GM12878 (cell line): ENCODE measurements at regions of chr11 and their contacts with region 1.

Region 1: GRCh38 chr11:65471410-65471762 is 27.5 kb upstream of the MALAT1 start:
- DNase-seq: no peak
- ATAC-seq: peak; percentile 65
- H3K4me3 ChIP-seq: 0 out of 2 replicates have a peak overlapping the region, but pooled peaks have one; percentile 31
- H3K27ac ChIP-seq: peak overlapping the region; percentile 76
- H3K4me1 ChIP-seq: peaks cover 28% of the 10 kb centered on the region
- H3K27me3 ChIP-seq: no peaks in the 10 kb centered on the region
- CTCF ChIP-seq: peak; percentile 67 to 76 (median 75)
- EP300 ChIP-seq: no peak
- POLR2A ChIP-seq: no peak
- RAD21 ChIP-seq: peak; percentile 65

Region 2: DNA sequence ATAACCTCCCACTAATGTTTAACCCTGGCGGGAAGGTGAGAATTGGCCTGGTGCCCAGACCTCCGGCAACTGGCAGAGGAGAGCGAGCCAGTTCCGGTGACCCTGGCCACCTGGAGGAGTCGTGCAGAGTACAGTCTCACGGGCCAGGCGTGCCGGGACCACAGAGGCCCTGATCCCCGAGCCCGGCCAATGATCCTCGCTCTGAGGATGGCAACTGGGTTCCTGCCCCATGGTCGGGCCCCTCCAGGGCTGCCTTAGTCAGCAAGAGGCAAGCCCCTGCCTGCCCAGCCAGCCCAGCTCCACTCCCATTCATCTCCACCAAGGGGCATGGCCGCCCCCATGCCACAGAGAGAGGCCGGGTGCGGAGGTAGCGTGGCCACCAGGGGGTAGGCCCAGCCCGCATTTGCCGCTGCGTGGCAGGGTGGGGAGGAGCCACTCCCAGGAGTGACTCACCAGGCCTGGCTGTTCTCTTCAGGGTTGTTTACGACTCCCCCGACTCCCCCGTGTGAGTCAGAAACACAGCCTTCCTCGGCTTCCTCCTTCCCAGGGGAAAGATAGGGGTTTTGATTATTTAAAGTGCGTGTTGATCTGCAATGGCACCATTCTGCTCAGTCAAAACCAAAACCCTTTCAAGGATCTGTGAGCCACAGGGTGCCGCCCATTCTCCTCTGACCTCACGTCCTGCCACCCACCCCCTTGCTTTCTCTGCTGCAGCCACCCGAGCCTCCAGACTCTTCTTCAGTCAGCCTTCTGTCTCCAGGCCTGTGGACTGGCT is 89.2 kb before region 1 on chr11 and contains the start of gene SLC25A45:
- CTCF ChIA-PET with region 1: interaction called, 13 read pairs
- POLR2A ChIA-PET with region 1: interaction called, 5 read pairs
- RAD21 ChIA-PET with region 1: interaction called, 9 read pairs
- SMC1A ChIA-PET with region 1: interaction called, 8 read pairs
- in situ Hi-C with region 1: no loop called
- intact Hi-C with region 1: no loop called
- DNase-seq: peak; percentile 84
- ATAC-seq: peak; percentile 86
- H3K4me3 ChIP-seq: peak within 1 kb of the TSS; percentile 90
- H3K27ac ChIP-seq: peak within 1 kb of the TSS; percentile 99
- H3K4me1 ChIP-seq: peaks cover 58% of the 10 kb centered on the region
- H3K27me3 ChIP-seq: no peaks in the 10 kb centered on the region
- CTCF ChIP-seq: peak; percentile 70 to 79 (median 71)
- EP300 ChIP-seq: peak in 1 of 2 experiments; percentile 24; a peak in 1 of 4 replicates
- POLR2A ChIP-seq: peak; percentile 78
- RAD21 ChIP-seq: peak; percentile 74
- polyA plus RNA-seq, gene SLC25A45: 4.1 to 9.7 TPM

Region 3: GRCh38 chr11:65454696-65455456 is 16.5 kb before region 1 on chr11:
- CTCF ChIA-PET with region 1: interaction called, 19 read pairs
- POLR2A ChIA-PET with region 1: interaction called, 23 read pairs
- RAD21 ChIA-PET with region 1: interaction called, 8 read pairs
- SMC1A ChIA-PET with region 1: interaction called, 13 read pairs
- in situ Hi-C with region 1: no loop called
- intact Hi-C with region 1: no loop called
- DNase-seq: peak; percentile 77
- ATAC-seq: peak; percentile 82
- H3K4me3 ChIP-seq: peak overlapping the region; percentile 80
- H3K27ac ChIP-seq: peak overlapping the region; percentile 93
- H3K4me1 ChIP-seq: peaks cover 25% of the 10 kb centered on the region
- H3K27me3 ChIP-seq: no peaks in the 10 kb centered on the region
- CTCF ChIP-seq: peak; percentile 12 to 40 (median 17); a peak in 4 of 6 replicates
- EP300 ChIP-seq: 0 out of 4 replicates have a peak, but pooled peaks of 1 of the 2 experiments have one; percentile 23
- POLR2A ChIP-seq: peak; percentile 99
- RAD21 ChIP-seq: 0 out of 2 replicates have a peak, but pooled peaks have one; percentile 5

Region 4: DNA sequence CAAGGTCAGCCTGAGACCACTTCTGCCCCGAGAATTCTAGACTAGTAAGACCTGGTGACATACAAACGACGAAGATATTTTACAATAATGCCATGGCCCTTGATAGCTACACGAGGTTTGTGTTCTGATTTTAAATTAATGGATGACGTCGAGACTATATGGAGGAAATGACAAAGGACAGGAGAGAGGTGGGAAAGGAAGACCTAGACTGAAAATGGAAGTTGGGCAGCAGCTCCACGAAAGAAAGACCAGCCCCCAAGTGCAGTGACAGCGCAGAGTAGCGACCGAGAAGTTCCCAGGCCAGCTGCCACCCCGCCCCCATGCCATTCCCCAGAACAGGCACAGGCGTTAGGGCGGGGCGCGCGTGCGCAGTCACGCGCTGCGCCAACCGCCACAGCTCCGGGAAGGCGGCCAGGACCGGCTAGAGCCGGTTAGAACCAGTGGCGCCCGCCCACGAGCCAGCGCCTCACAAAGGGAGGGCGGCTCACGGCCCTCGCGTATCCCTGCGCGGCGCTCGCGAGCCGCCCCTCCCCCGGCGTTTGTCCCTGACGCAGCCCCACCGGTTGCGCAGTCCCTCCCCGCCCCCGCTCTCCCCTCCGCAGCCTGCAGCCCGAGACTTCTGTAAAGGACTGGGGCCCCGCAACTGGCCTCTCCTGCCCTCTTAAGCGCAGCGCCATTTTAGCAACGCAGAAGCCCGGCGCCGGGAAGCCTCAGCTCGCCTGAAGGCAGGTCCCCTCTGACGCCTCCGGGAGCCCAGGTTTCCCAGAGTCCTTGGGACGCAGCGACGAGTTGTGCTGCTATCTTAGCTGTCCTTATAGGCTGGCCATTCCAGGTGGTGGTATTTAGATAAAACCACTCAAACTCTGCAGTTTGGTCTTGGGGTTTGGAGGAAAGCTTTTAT is 26.0 kb after region 1 on chr11:
- CTCF ChIA-PET with region 1: interaction called, 728 read pairs
- POLR2A ChIA-PET with region 1: interaction called, 429 read pairs
- RAD21 ChIA-PET with region 1: interaction called, 208 read pairs
- SMC1A ChIA-PET with region 1: interaction called, 481 read pairs
- in situ Hi-C with region 1: no loop called
- intact Hi-C with region 1: loop called (anchors 2 kb)
- DNase-seq: peak; percentile 95
- ATAC-seq: peak; percentile 71
- H3K4me3 ChIP-seq: peak overlapping the region; percentile 77
- H3K27ac ChIP-seq: peak overlapping the region; percentile 100
- H3K4me1 ChIP-seq: peaks cover 37% of the 10 kb centered on the region
- H3K27me3 ChIP-seq: no peaks in the 10 kb centered on the region
- CTCF ChIP-seq: no peak
- EP300 ChIP-seq: peak; percentile 86 to 98
- POLR2A ChIP-seq: peak; percentile 69
- RAD21 ChIP-seq: peak; percentile 24; the same call in 1 of the 2 replicates

Region 5: DNA sequence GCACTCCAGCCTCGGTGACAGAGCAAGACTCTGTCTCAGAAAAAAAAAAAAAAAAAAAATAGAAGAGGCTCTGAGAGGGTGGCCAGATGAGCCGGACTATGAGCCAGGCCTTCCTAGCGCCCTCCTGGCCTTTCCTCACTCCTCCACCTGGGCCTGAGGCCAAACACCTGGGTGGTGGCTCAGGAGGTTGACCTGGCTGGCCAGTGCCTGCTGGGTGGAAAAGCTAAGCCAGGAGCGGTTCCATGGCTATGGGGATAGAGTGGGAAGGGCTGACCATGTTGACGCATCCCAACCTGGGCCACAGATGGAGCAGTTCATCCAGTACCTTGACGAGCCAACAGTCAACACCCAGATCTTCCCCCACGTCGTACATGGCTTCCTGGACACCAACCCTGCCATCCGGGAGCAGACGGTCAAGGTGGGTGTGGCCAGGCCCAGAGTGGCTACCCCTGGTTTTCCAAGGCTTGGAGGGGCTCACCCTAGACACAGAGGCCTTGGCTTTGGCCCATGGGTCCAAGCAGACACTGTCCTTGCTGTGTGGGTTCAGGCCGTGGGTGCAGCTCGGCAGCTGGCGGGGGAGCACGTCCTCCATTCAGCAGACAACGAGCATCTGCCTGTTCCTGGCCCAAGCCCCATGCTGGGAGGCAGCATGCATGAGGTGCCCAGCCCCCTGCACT is 61.1 kb after region 1 on chr11:
- CTCF ChIA-PET with region 1: no interaction called
- POLR2A ChIA-PET with region 1: no interaction called
- RAD21 ChIA-PET with region 1: no interaction called
- SMC1A ChIA-PET with region 1: no interaction called
- in situ Hi-C with region 1: no loop called
- intact Hi-C with region 1: no loop called
- DNase-seq: no peak
- ATAC-seq: no peak
- H3K4me3 ChIP-seq: no peak overlapping the region
- H3K27ac ChIP-seq: no peak overlapping the region
- H3K4me1 ChIP-seq: no peaks in the 10 kb centered on the region
- H3K27me3 ChIP-seq: no peaks in the 10 kb centered on the region
- CTCF ChIP-seq: no peak
- EP300 ChIP-seq: no peak
- POLR2A ChIP-seq: 0 out of 2 replicates have a peak, but pooled peaks have one; percentile 49
- RAD21 ChIP-seq: no peak